ENCODE measurements at regions of chr1 and their contacts with region 1.

Region 1: DNA sequence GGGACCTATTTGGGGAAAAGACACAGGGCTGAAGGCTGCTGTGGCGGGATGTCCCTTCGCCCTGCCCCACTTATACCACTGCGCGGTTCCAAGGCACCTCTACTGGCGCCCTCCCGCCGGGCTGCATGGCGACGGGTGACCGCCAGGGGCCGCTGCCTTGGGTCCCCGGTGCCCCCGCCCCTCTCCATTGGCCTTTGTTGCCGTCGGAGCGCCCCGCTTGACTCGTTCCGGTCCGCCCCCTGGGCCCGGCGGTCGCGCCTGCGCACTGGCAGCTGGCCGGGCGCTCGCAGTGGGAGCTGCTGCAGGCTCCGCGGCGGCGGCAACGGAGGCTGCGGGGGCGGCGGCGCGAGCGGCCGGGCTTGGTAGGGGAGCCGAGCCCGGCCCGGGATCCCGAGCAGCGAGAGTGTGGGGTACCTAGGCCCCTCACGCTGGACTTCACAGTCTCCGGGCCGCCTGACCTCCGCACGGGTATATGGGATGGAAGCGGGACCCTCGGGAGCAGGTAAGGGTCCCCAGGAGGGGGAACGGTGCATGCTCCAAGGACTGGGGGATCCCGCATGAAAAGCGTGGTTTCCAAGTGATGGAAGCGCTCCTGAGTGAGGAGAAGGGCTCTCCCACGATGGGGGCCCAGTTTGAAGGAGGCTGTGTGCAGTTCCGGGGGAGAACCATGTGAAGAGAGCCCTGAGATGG is at the start of gene AGO1:
- DNase-seq: peak; percentile 97
- H3K4me3 Mint-ChIP-seq: peak within 1 kb of the TSS; percentile 94
- H3K27ac Mint-ChIP-seq: peak within 1 kb of the TSS; percentile 54
- H3K4me1 Mint-ChIP-seq: peaks cover 55% of the 10 kb centered on the region
- H3K27me3 Mint-ChIP-seq: peaks cover 9% of the 10 kb centered on the region
- total RNA-seq, gene AGO1: 20.8 to 21.0 TPM

Region 2: GRCh38 chr1:35899941-35900340 is 16.9 kb after region 1 on chr1:
- CTCF ChIA-PET with region 1: interaction called, 11 read pairs
- POLR2A ChIA-PET with region 1: interaction called, 8 read pairs
- DNase-seq: no peak
- H3K4me3 Mint-ChIP-seq: no peak overlapping the region
- H3K27ac Mint-ChIP-seq: no peak overlapping the region
- H3K4me1 Mint-ChIP-seq: no peaks in the 10 kb centered on the region
- H3K27me3 Mint-ChIP-seq: no peaks in the 10 kb centered on the region

Region 3: GRCh38 chr1:35915693-35916092 is 32.6 kb after region 1 on chr1:
- CTCF ChIA-PET with region 1: no interaction called
- POLR2A ChIA-PET with region 1: no interaction called
- DNase-seq: no peak
- H3K4me3 Mint-ChIP-seq: no peak overlapping the region
- H3K27ac Mint-ChIP-seq: no peak overlapping the region
- H3K4me1 Mint-ChIP-seq: no peaks in the 10 kb centered on the region
- H3K27me3 Mint-ChIP-seq: no peaks in the 10 kb centered on the region

Measured in activated CD4-positive, alpha-beta memory T cell treated with anti-CD3 and anti-CD28 coated beads, Interleukin-2, amount 10 ng/mL, durations not matched to agents 7 days and 5 days (primary cell).